Activated T-helper 2 cell treated with anti-CD3 and anti-CD28 coated beads, Interferon-gamma antibody, Interleukin-2, Interleukin-4, amounts not matched to agents 10 μg/mL and 5 μg/mL and 100 μg/mL, durations not matched to agents 14 hours and 24 hours and 36 hours (primary cell): ENCODE measurements at regions of chr18 and their contacts with region 1.

Region 1: DNA sequence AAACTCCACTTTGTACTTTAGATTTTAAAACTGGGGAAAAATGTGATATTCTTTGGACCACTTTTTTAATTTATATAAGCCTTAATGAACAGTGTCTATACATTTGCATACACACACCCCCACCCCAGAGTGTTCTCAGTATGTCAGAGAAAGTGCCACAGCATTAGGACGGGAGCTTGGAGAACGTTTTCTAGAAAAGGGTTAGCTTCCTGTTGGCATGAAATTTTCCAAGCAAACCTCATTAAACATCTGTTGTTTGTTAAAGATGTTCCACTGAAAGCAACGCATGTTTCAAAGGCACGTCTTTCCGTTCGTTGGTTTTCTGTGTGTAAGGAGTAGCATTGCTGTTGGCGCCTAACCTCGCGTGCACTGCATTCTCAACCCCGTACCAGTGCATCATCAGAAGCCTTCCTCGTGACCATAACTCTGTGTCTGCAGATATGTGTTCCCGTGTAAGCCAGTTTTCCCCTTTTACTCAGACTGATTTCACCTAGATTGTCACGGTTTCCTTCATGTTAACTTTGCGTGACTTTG is 228.5 kb downstream of the ALPK2 start:
- DNase-seq: no peak
- H3K4me3 Mint-ChIP-seq: no peak overlapping the region
- H3K27ac Mint-ChIP-seq: peak overlapping the region; percentile 49
- H3K4me1 Mint-ChIP-seq: no peaks in the 10 kb centered on the region
- H3K27me3 Mint-ChIP-seq: peaks cover 2% of the 10 kb centered on the region

Region 2: DNA sequence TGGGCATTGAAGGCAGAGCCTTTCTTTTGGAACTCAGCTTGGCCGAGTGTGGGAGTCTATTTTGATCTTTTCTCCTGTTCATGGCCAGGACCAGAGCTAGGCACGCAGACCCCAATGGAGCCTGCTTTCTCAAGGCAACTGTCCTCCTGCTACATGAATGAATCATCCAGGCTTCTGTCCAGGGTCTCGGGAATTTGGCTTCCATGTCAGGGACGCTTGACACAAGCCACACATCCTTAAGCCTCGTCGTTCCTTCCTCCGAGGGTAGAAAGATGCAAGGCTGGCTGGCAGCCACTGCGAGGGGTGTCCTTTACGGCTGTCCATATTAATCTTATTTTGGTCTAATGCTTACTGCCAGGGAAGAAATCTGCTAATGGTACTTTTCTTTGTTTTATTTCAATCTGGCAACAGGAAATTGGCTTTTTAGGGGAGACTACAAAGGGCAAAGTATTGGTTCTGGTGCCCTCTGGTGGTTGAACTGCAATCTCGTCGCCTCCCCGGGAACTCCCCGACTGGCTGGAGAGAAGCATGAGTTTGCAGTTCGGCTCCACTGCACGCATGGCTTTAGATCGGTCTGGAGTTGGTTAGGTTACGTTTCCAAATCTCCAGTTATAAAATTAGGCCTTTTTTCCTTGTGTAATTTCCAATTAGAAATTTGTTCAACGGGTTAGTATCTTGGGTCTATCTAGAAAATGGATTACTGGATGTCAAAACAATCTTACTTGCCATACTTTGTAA is 93.3 kb after region 1 on chr18:
- intact Hi-C with region 1: loop called (anchors 1 kb)
- DNase-seq: peak; percentile 58
- H3K4me3 Mint-ChIP-seq: no peak overlapping the region
- H3K27ac Mint-ChIP-seq: no peak overlapping the region
- H3K4me1 Mint-ChIP-seq: peaks cover 9% of the 10 kb centered on the region
- H3K27me3 Mint-ChIP-seq: peaks cover 26% of the 10 kb centered on the region